ENCODE measurements at regions of chr20 and their contacts with region 1.

Region 1: GRCh38 chr20:32484958-32485769 is 100.0 kb downstream of the NOL4L start:
- DNase-seq: peak; percentile 84 to 91 (median 86)
- H3K4me3 ChIP-seq: peak overlapping the region; percentile 2 to 64
- H3K4me3 Mint-ChIP-seq: peak overlapping the region; percentile 90 to 98 (median 94)
- H3K27ac ChIP-seq: peak overlapping the region; percentile 58
- H3K27ac Mint-ChIP-seq: peak overlapping the region; percentile 92 to 98 (median 96)
- H3K4me1 ChIP-seq: peaks cover 45% of the 10 kb centered on the region
- H3K4me1 Mint-ChIP-seq: peaks cover 30 to 50% (median 35%) of the 10 kb centered on the region in 4 donors
- H3K27me3 ChIP-seq: no peaks in the 10 kb centered on the region
- H3K27me3 Mint-ChIP-seq: peaks cover 0 to 1% of the 10 kb centered on the region in 2 donors

Region 2: DNA sequence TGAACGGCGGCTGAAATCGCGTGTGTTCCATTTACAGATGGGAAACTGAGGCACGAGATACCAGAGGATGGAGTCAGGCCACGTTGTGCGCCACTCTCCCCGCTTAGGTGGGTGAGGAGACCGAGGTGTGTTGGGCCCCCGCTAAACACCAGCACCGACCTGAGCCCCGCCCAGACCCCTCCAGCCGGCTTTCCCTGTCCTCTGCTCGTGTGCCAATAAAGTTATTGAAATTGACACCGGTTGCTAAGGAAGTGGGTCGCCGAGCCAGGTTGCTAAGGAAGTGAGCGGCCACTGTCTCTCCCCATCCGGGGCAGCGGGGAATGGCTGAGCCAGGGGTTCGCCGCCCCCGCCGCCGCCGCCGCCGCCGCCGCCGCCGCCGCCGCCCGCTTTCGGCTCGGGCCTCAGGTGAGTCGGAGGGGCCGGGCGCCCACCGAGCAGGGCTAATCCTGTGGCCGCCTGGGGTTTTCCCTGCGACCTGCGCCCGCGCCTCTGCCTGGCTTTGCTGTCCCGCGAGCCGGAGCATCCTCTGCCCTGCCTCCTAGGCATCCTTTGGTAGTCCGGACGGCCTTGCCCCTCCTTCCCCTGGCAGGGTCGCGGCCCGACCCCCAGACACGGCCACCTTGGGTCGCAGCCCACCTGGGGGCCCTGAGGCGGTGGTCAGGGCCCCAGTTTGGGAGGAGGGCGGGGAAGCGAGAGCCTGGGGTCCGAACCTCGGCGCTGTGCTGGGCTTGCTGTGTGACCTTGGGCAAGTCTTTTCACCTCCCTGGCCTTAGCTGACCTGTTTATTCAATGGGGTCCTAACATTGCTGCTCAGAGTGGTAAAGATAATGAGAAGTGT is 207.6 kb before region 1 on chr20 and contains the start of gene KIF3B:
- CTCF ChIA-PET with region 1: no interaction called
- POLR2A ChIA-PET with region 1: interaction called, 4 read pairs
- intact Hi-C with region 1: loop called (anchors 5 kb)
- DNase-seq: peak; percentile 87 to 90 (median 88)
- H3K4me3 ChIP-seq: peak within 1 kb of the TSS; percentile 68 to 96
- H3K4me3 Mint-ChIP-seq: peak within 1 kb of the TSS; percentile 91 to 94 (median 92)
- H3K27ac ChIP-seq: peak within 1 kb of the TSS; percentile 85
- H3K27ac Mint-ChIP-seq: peak within 1 kb of the TSS; percentile 88 to 98 (median 96)
- H3K4me1 ChIP-seq: peaks cover 27% of the 10 kb centered on the region
- H3K4me1 Mint-ChIP-seq: peaks cover 27 to 52% (median 42%) of the 10 kb centered on the region in 4 donors
- H3K27me3 ChIP-seq: no peaks in the 10 kb centered on the region
- H3K27me3 Mint-ChIP-seq: no peaks in the 10 kb centered on the region
- total RNA-seq, gene KIF3B: 14.2 to 14.5 TPM

Region 3: DNA sequence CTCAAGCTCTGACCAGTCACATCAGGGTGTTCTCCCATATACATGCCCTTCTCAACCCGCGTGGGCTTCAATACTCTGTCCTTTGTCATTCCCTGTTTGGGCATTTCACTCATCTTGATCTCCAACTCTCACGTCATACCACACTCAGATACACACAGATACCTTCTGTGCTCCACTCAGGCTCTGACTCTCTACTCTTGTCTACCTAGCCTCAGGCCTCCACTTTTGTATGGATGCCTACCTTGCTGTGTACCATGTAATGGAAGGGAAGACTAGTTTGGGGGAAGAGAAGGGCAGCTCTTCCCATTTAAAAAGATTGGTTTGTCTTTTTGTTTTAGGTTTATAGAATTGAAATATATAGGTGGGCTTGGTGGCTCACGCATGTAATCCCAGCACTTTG is 78.5 kb before region 1 on chr20:
- CTCF ChIA-PET with region 1: no interaction called
- POLR2A ChIA-PET with region 1: interaction called, 8 read pairs
- intact Hi-C with region 1: loop called (anchors 1 kb)
- DNase-seq: no peak
- H3K4me3 ChIP-seq: no peak overlapping the region
- H3K4me3 Mint-ChIP-seq: peak overlapping the region in 6 of 8 donors; percentile 62 to 85 (median 79)
- H3K27ac ChIP-seq: no peak overlapping the region
- H3K27ac Mint-ChIP-seq: peak overlapping the region; percentile 74 to 97 (median 86)
- H3K4me1 ChIP-seq: peaks cover 37% of the 10 kb centered on the region
- H3K4me1 Mint-ChIP-seq: peaks cover 19 to 60% (median 44%) of the 10 kb centered on the region in 4 donors
- H3K27me3 ChIP-seq: no peaks in the 10 kb centered on the region
- H3K27me3 Mint-ChIP-seq: no peaks in the 10 kb centered on the region

Region 4: DNA sequence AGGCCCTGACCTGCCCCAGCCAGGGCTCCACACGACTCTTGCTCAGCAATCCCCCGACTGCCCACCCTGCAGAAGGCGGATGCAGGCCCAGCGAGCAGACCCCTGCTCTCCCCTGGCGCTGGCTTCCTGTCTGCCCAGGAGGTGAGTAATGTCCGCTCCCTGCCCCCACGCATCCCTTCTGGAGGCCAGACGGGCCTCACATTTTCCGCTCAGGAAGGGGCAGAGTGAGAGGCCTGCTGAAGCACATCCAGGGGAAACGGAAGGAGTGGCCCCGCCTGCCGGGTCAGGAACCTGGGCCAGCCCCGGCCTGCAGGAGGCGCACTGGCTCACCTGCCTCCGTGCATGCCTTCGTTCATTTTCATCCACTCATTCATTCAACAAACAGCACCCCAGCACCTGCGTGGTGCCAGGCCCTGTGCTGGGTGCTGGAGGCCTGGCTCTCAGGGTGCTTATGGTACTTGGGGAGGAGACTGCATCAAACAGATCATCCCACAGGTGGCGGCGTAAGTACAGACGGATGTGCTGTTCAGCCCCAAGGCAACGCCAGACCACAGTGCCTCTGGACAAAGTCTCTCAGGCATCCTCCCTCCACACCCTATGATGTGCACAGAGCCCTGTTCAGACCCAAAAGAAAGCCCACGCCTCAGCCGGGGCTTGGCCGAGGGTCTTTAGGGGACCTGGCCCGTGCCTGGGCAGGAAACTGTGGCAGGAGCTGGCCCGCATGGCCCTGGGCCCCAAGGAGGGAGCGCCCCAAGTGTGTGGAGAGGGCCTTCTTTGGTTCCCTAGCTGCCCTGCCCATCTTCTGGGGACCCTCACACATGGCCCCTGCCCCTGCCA is 14.9 kb before region 1 on chr20:
- CTCF ChIA-PET with region 1: interaction called, 4 read pairs
- POLR2A ChIA-PET with region 1: interaction called, 6 read pairs
- intact Hi-C with region 1: loop called (anchors 2 kb)
- DNase-seq: peak in 2 of 5 donors; percentile 18 to 37
- H3K4me3 ChIP-seq: no peak overlapping the region
- H3K4me3 Mint-ChIP-seq: no peak overlapping the region
- H3K27ac ChIP-seq: peak overlapping the region; percentile 9
- H3K27ac Mint-ChIP-seq: peak overlapping the region in 6 of 7 donors; percentile 41 to 87 (median 74)
- H3K4me1 ChIP-seq: no peaks in the 10 kb centered on the region
- H3K4me1 Mint-ChIP-seq: peaks cover 7 to 14% (median 10%) of the 10 kb centered on the region in 4 donors
- H3K27me3 ChIP-seq: no peaks in the 10 kb centered on the region
- H3K27me3 Mint-ChIP-seq: no peaks in the 10 kb centered on the region

Region 5: DNA sequence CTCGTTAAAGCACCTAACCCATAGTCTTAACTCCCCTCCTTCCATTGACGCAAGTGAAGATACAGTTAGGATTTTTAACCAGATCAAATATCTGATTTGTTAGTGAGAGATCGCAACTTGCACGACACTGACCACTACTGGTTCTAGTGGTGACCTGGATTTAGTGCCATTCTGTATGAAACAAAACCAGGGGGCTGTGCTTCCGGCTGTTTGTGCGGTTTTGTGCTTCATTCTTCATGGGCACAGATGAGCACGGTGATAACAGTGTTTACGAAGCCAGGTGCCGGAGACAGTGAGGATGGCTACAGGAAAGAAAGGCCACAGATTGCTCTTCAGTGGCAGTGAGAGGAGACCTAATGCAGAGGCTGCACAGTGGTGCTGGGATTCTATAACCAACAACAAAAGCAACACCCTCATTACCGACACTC is 24.5 kb after region 1 on chr20:
- CTCF ChIA-PET with region 1: interaction called, 11 read pairs
- POLR2A ChIA-PET with region 1: interaction called, 27 read pairs
- intact Hi-C with region 1: loop called (anchors 1 kb)
- DNase-seq: peak; percentile 76 to 89 (median 82)
- H3K4me3 ChIP-seq: peak overlapping the region in 1 of 2 donors; percentile 43
- H3K4me3 Mint-ChIP-seq: peak overlapping the region; percentile 77 to 86 (median 82)
- H3K27ac ChIP-seq: peak overlapping the region; percentile 60
- H3K27ac Mint-ChIP-seq: peak overlapping the region; percentile 92 to 97 (median 94)
- H3K4me1 ChIP-seq: peaks cover 71% of the 10 kb centered on the region
- H3K4me1 Mint-ChIP-seq: peaks cover 56 to 90% (median 68%) of the 10 kb centered on the region in 4 donors
- H3K27me3 ChIP-seq: no peaks in the 10 kb centered on the region
- H3K27me3 Mint-ChIP-seq: no peaks in the 10 kb centered on the region

Region 6: DNA sequence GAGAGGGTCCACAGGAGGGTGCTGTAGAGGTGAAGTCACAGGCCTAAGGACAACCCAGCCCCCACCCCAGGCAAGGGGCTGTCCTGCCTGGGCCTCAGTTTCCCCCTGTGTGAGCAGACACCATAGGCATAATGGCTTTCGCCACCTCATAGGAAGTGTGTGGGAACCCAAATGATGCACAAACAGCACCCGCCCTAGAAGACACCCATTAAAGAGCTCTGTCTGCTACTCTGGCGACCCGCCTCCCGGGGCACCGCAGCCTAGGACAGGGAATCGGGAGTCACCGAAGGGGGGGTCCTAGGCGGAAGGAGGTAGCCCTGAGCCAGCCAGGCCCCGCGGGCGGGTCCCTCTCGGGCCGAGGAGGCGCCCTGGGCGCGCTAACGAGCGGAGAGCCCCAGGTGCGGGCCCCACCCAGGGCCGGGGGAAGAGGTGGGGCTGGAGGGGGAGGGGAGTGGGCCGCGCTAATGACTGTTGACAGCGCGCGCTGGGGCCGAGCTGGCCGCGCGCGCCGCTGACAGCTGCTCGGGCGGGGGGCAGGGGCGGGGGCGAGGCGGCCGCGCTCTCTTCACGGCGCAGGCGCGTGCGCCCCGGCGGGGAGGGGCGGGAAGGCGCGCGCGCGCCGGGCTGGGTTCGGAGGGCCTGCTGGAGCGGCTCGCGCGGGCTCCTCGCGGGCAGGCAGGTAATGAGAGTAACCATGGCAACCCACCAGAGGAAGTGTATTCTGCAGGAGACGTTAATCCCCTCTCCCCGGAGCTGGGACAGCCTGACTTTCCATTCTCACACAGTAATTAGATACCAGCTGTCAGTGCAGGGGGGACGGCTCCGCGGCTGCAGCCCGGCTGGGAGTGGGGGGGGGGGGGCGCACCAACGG is 51.0 kb after region 1 on chr20:
- CTCF ChIA-PET with region 1: interaction called, 9 read pairs
- POLR2A ChIA-PET with region 1: interaction called, 11 read pairs
- intact Hi-C with region 1: loop called (anchors 2 kb)
- DNase-seq: peak; percentile 85 to 94 (median 88)
- H3K4me3 ChIP-seq: peak overlapping the region; percentile 18 to 57
- H3K4me3 Mint-ChIP-seq: peak overlapping the region; percentile 78 to 94 (median 86)
- H3K27ac ChIP-seq: peak overlapping the region; percentile 77
- H3K27ac Mint-ChIP-seq: peak overlapping the region; percentile 95 to 99 (median 97)
- H3K4me1 ChIP-seq: peaks cover 90% of the 10 kb centered on the region
- H3K4me1 Mint-ChIP-seq: peaks cover 61 to 91% (median 77%) of the 10 kb centered on the region in 4 donors
- H3K27me3 ChIP-seq: no peaks in the 10 kb centered on the region
- H3K27me3 Mint-ChIP-seq: no peaks in the 10 kb centered on the region

Region 7: DNA sequence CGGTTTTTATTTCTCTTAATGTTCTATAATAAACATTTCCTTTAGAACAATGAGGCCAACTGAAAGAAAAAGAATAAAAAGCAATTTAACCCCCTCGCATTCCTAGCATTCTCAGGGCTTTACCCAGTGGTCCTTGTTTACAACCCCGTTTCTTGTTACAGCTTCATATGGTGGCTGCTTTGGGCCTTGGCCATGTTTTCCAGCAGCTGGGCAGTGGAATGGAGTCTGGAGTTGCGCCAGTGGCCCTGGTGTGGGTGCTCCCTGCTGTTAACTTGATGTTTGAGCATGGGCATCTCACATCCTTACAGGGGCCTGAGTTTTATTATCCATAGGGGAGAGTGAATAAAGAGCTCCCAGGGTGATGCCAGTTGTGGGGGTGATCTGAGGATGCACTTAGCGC is 392.3 kb after region 1 on chr20:
- CTCF ChIA-PET with region 1: no interaction called
- POLR2A ChIA-PET with region 1: no interaction called
- intact Hi-C with region 1: no loop called
- DNase-seq: no peak
- H3K4me3 ChIP-seq: no peak overlapping the region
- H3K4me3 Mint-ChIP-seq: no peak overlapping the region
- H3K27ac ChIP-seq: no peak overlapping the region
- H3K27ac Mint-ChIP-seq: no peak overlapping the region
- H3K4me1 ChIP-seq: no peaks in the 10 kb centered on the region
- H3K4me1 Mint-ChIP-seq: no peaks in the 10 kb centered on the region
- H3K27me3 ChIP-seq: no peaks in the 10 kb centered on the region
- H3K27me3 Mint-ChIP-seq: no peaks in the 10 kb centered on the region

Measured in CD4-positive, alpha-beta memory T cell (primary cell).